ENCODE measurements at regions of chr1 and their contacts with region 1.

Region 1: GRCh38 chr1:241627453-241628259 is 12.5 kb downstream of the CHML start:
- DNase-seq: peak in 27 of 35 experiments; percentile 7 to 80 (median 39)
- ATAC-seq: peak; percentile 81 to 90 (median 86)
- H3K4me3 ChIP-seq: peak overlapping the region; percentile 21 to 35
- H3K4me3 Mint-ChIP-seq: peak overlapping the region; percentile 60 to 72 (median 64)
- H3K27ac ChIP-seq: peak overlapping the region; percentile 65
- H3K27ac Mint-ChIP-seq: peak overlapping the region; percentile 95
- H3K4me1 ChIP-seq: peaks cover 7 to 12% of the 10 kb centered on the region in 2 experiments
- H3K4me1 Mint-ChIP-seq: peaks cover 22 to 32% (median 23%) of the 10 kb centered on the region in 3 donors
- H3K27me3 ChIP-seq: no peaks in the 10 kb centered on the region
- H3K27me3 Mint-ChIP-seq: no peaks in the 10 kb centered on the region

Region 2: GRCh38 chr1:241519308-241520079 is 108.2 kb before region 1 on chr1 and contains the start of gene FH:
- CTCF ChIA-PET with region 1: interaction called in 1 of 2 experiments, 11 read pairs
- POLR2A ChIA-PET with region 1: interaction called, 3 read pairs
- DNase-seq: peak; percentile 82 to 97 (median 92)
- ATAC-seq: peak; percentile 96 to 98 (median 97)
- H3K4me3 ChIP-seq: peak within 1 kb of the TSS; percentile 46 to 89
- H3K4me3 Mint-ChIP-seq: peak within 1 kb of the TSS in 2 of 3 donors; percentile 86 to 88
- H3K27ac ChIP-seq: peak within 1 kb of the TSS; percentile 16
- H3K27ac Mint-ChIP-seq: peak within 1 kb of the TSS; percentile 66 to 88
- H3K4me1 ChIP-seq: peaks cover 5 to 9% of the 10 kb centered on the region in 2 experiments
- H3K4me1 Mint-ChIP-seq: peaks cover 22 to 35% (median 23%) of the 10 kb centered on the region in 3 donors
- H3K27me3 ChIP-seq: no peaks in the 10 kb centered on the region
- H3K27me3 Mint-ChIP-seq: peaks cover 17 to 24% of the 10 kb centered on the region in 2 donors
- total RNA-seq, gene FH: 14.6 to 32.7 (median 28.2) TPM

Region 3: DNA sequence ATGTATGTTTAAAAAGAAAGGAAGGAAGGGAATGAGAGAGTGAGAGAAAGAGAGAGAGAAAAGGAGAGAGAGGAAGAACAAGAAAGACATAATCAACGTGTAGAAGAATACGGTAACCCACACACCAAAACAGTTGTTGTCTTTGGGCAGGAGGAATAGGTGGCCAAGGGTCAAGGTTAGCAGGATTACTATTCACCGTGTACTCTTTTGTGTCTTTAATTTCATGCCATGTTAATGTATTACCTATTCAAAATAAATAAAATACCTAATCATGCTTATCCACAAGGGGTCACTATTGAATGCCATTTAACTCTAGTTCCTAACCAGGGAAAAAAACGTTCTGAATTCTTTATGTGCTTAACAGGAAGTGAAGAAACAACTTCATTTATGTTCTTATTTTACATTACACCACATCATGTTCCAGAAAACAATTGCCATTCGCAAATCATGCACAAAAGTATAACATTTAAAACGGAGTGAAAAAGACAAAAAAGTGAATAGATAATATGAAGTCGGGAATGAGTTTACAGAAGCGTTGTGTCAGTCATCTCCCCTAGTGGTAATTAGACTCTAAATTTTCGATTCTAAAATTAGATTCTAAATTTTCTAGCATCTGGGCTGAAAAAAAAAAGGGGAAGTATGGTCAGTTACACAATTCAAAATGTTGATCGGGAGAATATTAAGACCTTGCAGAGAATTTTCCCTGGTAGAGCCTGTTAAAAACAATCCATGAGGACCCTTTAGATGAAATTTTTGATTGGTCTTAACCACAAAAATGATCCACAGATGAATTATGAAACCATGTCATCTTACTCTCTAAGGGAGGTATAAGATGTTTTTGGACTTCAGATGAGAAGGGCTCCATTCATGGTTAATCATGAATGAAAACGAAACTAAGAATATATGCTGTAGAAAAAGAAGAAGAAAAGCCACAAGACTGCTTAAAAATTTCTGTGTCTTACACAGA is 96.2 kb before region 1 on chr1:
- CTCF ChIA-PET with region 1: interaction called, 7 to 12 read pairs
- POLR2A ChIA-PET with region 1: no interaction called
- DNase-seq: peak in 2 of 35 experiments; percentile 20 to 76
- ATAC-seq: peak; percentile 78 to 93 (median 84)
- H3K4me3 ChIP-seq: peak overlapping the region; percentile 52 to 55
- H3K4me3 Mint-ChIP-seq: peak overlapping the region; percentile 81 to 96 (median 87)
- H3K27ac ChIP-seq: peak overlapping the region; percentile 7
- H3K27ac Mint-ChIP-seq: peak overlapping the region; percentile 44 to 90
- H3K4me1 ChIP-seq: peaks cover 2 to 9% of the 10 kb centered on the region in 2 experiments
- H3K4me1 Mint-ChIP-seq: peaks cover 12 to 20% (median 15%) of the 10 kb centered on the region in 3 donors
- H3K27me3 ChIP-seq: no peaks in the 10 kb centered on the region
- H3K27me3 Mint-ChIP-seq: peaks cover 3 to 6% of the 10 kb centered on the region in 2 donors

Region 4: GRCh38 chr1:241611063-241611462 is 16.6 kb before region 1 on chr1:
- CTCF ChIA-PET with region 1: interaction called, 26 to 65 read pairs
- POLR2A ChIA-PET with region 1: no interaction called
- DNase-seq: peak in 7 of 35 experiments; percentile 1 to 75 (median 8)
- ATAC-seq: peak; percentile 75 to 88 (median 78)
- H3K4me3 ChIP-seq: no peak overlapping the region
- H3K4me3 Mint-ChIP-seq: no peak overlapping the region
- H3K27ac ChIP-seq: no peak overlapping the region
- H3K27ac Mint-ChIP-seq: no peak overlapping the region
- H3K4me1 ChIP-seq: peaks cover 0 to 2% of the 10 kb centered on the region in 2 experiments
- H3K4me1 Mint-ChIP-seq: no peaks in the 10 kb centered on the region
- H3K27me3 ChIP-seq: no peaks in the 10 kb centered on the region
- H3K27me3 Mint-ChIP-seq: no peaks in the 10 kb centered on the region

Measured in T-cell (primary cell).